ENCODE measurements at regions of chr10 and their contacts with region 1.

Region 1: DNA sequence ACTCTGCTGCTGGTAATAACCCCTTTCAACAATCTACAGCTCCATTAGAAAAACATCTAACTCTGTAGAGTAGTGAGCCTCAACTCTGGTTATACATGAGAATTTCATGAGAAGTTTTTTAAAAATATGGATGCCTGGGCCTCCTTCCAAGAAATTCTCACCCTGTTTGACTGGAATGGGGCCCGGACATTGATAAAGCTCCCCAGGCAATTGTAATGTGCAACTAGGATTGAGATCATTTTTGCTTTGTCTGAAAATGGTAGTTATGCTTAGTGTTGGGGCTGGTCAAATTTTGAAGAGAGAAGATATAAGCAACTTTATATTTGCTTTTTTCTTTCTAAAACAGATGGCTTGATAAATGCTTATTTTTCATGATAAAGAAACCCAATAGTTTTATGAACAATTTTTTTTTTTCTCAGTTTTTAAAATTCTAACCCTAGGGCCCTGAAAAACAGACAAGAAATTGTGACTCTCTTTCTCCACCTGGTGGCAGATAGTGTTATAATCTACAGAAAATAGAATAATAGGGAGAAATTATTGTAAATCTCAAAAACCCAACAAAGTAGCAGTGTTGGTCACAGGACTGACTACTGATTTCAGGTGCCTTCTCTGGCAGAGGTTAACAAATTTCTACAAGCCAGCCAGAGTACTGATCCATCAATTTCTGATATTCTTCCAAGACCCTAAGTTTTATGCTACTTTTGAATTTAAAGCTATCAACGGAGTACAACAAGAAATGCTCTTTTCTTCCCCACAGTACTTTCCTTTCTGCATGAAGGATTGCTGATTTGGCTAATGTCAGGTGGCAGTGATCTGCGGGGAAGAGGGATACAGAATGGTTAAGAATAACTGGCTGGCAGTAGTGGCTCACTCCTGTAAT is 174.8 kb downstream of the DKK1 start:
- DNase-seq: no peak
- H3K4me3 ChIP-seq: no peak overlapping the region
- H3K27ac ChIP-seq: no peak overlapping the region
- H3K4me1 ChIP-seq: no peaks in the 10 kb centered on the region
- H3K27me3 ChIP-seq: no peaks in the 10 kb centered on the region
- CTCF ChIP-seq: peak in 2 of 3 experiments; percentile 25 to 38; a peak in 2 of 4 replicates
- EP300 ChIP-seq: no peak
- POLR2A ChIP-seq: no peak
- RAD21 ChIP-seq: peak; percentile 50 to 60

Region 2: DNA sequence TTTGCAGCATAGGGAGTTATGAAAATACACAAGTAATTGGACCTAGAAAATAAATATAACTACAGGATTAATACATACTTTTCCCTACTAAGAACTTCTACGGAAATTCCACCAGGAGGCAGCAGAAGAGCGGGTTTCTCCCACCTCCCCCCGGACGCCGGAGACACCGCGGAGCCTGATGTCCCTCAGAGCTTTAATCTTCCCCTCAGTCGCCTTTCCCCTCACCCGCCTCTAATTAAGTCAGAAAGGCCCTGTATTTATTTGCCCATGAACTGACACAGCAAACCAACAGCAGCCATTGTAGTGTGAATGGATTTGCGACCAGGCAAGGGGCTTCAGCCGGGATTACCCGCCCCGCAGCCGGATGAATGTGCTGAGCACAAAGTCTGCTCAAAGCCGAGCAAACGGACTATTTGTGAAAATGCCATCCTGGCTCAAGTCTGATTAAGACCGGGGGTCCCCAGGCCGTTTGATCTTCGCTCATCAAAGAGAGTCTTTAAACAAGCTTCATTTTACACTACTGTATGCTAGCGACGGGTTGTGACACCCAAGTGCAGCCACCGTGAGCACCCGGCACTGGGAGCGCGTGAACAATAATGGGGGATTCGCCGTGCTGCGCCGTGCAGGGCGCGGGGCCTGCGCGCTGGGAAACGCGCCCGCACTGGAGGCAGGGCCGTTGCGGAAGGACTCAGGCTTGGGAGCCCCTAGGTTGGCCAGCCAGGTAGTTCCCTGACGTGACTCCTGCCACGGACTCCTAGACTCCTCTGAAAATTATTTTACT is 180.4 kb before region 1 on chr10:
- CTCF ChIA-PET with region 1: interaction called, 136 read pairs
- POLR2A ChIA-PET with region 1: interaction called, 4 read pairs
- DNase-seq: peak in 1 of 2 experiments; percentile 77
- H3K4me3 ChIP-seq: peak overlapping the region; percentile 46 to 67 (median 58)
- H3K27ac ChIP-seq: no peak overlapping the region
- H3K4me1 ChIP-seq: peaks cover 0 to 5% (median 3%) of the 10 kb centered on the region in 4 experiments; a peak in 4 of 7 replicates
- H3K27me3 ChIP-seq: peaks cover 37 to 51% (median 47%) of the 10 kb centered on the region in 4 experiments
- CTCF ChIP-seq: peak; percentile 58 to 74 (median 63)
- EP300 ChIP-seq: no peak
- POLR2A ChIP-seq: no peak
- RAD21 ChIP-seq: peak; percentile 85 to 92

Region 3: GRCh38 chr10:52318822-52319461 is 169.9 kb before region 1 on chr10:
- CTCF ChIA-PET with region 1: interaction called, 136 read pairs
- POLR2A ChIA-PET with region 1: no interaction called
- DNase-seq: no peak
- H3K4me3 ChIP-seq: no peak overlapping the region
- H3K27ac ChIP-seq: no peak overlapping the region
- H3K4me1 ChIP-seq: peaks cover 0 to 5% (median 2%) of the 10 kb centered on the region in 4 experiments; a peak in 4 of 7 replicates
- H3K27me3 ChIP-seq: peaks cover 14 to 29% (median 22%) of the 10 kb centered on the region in 4 experiments
- CTCF ChIP-seq: no peak
- EP300 ChIP-seq: no peak
- POLR2A ChIP-seq: no peak
- RAD21 ChIP-seq: no peak

Region 4: DNA sequence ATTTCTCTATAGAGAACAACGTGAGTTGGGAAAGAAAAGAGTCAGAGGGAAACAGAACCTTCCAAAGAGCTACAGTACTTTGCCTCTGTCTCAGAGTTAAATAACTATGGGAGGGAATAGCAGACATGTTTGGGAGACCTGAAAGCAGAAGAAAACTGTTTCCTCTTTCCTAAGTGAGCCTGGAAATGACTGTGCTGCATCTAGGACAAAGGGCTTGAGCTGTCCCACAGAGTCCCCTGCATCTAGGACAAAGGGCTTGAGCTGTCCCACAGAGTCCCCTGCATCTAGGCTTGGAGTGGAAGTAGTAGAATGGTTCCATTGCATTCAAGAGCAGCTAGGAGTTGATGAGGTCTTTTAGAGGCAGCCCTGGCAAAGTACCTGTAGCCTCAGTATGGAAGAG is 25.0 kb before region 1 on chr10:
- CTCF ChIA-PET with region 1: interaction called, 15 read pairs
- POLR2A ChIA-PET with region 1: no interaction called
- DNase-seq: no peak
- H3K4me3 ChIP-seq: no peak overlapping the region
- H3K27ac ChIP-seq: no peak overlapping the region
- H3K4me1 ChIP-seq: no peaks in the 10 kb centered on the region
- H3K27me3 ChIP-seq: no peaks in the 10 kb centered on the region
- CTCF ChIP-seq: no peak
- EP300 ChIP-seq: no peak
- POLR2A ChIP-seq: no peak
- RAD21 ChIP-seq: no peak

Region 5: DNA sequence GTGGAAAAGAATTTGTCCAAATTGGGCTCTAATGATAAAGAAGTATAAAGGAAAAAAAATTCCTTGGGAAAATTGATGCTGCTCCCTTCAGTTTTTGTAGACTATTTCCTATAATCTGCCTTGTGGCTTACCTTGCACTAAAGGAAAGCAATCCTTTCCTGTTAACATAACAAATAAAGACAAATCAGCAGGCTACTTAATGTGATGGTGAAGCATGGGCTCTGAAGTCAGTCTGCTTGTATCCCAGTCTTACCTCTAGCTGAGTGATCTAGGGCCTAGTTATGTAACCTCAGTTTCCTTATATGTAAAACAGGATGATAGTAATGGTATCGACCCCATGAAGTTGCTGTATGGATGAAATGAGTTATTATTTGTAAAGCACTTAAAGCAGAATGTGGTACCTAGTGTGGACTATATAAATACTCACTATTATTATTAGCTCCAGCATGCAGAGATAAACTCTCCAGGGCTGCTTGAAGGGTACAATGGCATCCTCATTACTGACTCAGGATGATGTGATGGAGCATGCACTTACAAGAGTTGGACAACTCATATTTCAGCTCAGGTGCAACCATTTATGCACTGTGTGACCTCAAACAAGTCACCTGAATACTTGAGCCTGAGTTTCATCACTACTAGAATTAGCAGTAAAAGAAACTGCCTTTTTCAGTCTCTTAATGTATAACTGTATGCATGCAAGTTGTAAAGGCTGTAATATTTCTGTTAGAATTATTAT is 18.7 kb before region 1 on chr10:
- CTCF ChIA-PET with region 1: interaction called, 12 read pairs
- POLR2A ChIA-PET with region 1: no interaction called
- DNase-seq: no peak
- H3K4me3 ChIP-seq: no peak overlapping the region
- H3K27ac ChIP-seq: no peak overlapping the region
- H3K4me1 ChIP-seq: peaks cover 0 to 4% (median 1%) of the 10 kb centered on the region in 4 experiments; a peak in 2 of 7 replicates
- H3K27me3 ChIP-seq: no peaks in the 10 kb centered on the region
- CTCF ChIP-seq: no peak
- EP300 ChIP-seq: no peak
- POLR2A ChIP-seq: no peak
- RAD21 ChIP-seq: no peak

Region 6: DNA sequence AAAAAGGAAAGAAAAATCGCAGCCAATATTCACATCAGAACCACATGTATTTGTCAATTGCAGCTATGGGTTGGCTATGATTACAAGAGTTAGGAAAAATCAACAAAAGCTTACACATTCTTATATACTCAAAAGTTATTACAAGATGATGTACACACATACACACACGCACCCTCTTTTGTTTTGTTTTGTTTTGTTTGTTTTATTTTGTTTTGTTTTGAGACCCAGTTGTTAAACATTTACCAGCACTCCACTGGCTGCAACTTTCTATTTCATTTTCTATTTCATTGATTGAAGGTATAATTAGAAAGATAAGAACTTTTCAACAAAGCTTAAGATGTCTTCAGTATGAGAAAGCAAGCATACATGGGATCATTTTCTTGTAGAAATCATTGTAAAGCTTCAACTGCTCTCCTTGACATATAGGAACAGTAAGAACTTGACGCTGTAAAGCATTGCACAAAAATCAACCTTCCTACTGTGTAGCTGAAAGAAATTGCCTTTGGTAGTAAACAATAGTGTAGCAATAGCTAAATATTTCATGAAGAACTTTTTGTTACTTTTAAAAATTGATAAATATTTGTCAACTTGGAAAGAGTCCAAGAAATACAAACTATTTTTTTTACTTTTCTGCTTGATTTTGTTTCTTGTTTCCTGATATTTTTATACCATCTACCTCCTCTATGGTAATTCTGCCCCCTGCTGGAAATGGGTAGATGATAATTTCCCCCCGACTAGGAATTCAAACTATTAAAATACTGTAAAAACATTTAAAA is 77.8 kb after region 1 on chr10:
- CTCF ChIA-PET with region 1: interaction called, 19 read pairs
- POLR2A ChIA-PET with region 1: no interaction called
- DNase-seq: no peak
- H3K4me3 ChIP-seq: no peak overlapping the region
- H3K27ac ChIP-seq: no peak overlapping the region
- H3K4me1 ChIP-seq: no peaks in the 10 kb centered on the region
- H3K27me3 ChIP-seq: no peaks in the 10 kb centered on the region
- CTCF ChIP-seq: peak in 2 of 3 experiments; percentile 18 to 24; a peak in 2 of 4 replicates
- EP300 ChIP-seq: no peak
- POLR2A ChIP-seq: no peak
- RAD21 ChIP-seq: peak; percentile 48 to 62